ENCODE measurements at regions of chr2 and their contacts with region 1.

Region 1: DNA sequence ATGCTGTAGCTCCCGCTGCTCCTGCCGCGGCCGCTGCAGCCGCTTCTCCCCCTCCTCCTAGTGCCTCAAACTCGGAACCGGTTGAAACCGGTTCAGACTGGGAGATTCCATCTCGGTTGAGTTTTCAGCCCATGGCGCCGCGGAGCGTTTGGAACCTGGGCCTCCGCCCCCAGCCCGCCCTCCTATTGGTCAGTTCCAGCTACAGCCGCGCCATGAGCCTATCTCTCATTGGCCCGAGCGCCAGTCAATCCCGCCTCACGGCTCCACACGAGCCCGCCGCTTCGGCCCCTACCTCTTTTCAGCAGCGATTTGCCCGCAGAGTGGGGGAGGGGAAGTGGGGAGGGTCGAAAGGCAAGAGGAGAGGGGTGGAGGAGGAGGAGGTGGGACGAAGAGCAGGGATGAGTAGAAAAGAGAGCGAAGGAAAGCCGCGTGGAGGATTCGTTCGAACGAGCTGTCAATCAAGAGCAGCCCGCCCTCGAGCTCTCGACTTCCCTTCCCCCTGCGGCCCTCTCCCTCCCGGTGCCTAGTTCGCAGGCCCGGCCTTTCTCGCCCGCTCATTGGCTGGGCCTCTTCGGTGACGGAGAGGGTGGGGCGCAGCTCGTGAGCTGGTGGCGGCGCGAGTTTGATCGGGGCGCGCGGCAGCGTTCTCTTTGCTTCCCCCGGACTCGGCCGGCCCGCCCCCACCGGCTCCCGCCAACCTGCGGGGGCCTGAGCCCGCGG is at the start of gene XPO1:
- DNase-seq: peak; percentile 100
- H3K4me3 Mint-ChIP-seq: peak within 1 kb of the TSS; percentile 97
- H3K27ac Mint-ChIP-seq: peak within 1 kb of the TSS; percentile 99
- H3K4me1 Mint-ChIP-seq: peaks cover 30% of the 10 kb centered on the region
- H3K27me3 Mint-ChIP-seq: peaks cover 3% of the 10 kb centered on the region
- total RNA-seq, gene XPO1: 191 to 198 TPM

Region 2: DNA sequence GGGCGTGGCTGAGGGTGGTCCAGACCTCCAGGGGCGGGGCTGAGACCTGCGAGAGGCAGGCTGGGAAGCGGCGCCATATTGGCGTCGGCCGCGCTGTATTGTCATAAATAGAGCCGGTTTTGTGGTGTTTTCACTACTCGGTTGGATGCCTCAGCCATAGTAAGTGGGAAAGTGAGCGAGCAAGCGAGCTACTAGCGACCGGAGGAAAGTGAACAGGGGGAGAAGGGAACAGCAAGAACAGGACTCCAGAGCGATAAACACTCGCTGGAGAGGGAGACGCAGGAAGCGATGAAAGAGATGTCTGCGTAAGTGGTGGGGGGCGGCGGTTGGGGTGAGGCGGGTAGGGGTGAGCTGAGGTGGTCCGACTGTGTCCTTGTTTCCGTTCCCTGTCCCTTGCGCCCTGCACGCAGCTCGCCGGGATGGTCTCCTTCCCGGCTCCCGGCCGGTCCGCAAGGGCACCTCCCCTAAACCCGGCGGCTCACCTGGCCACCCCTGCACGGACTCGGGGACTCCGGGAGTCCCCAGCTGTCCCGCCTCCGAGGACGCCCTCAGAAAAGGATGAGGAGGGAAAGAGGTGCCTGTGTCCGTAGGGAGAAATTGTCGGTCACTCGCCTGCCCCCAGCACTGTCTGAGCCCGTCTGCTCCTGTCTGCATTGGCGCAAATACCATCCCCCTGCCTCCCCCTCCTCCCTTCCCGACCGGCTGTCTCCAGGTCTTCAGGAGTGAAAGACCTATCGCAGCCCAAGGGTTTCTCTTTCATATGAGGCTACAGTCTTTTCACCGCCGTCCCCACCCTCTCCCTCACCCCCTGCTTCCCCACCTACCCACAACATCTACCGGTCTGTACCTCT is 781.9 kb before region 1 on chr2 and contains the start of gene PAPOLG:
- CTCF ChIA-PET with region 1: no interaction called
- POLR2A ChIA-PET with region 1: interaction called, 5 read pairs
- intact Hi-C with region 1: loop called (anchors 5 kb)
- DNase-seq: peak; percentile 98
- H3K4me3 Mint-ChIP-seq: peak within 1 kb of the TSS; percentile 99
- H3K27ac Mint-ChIP-seq: peak within 1 kb of the TSS; percentile 96
- H3K4me1 Mint-ChIP-seq: peaks cover 39% of the 10 kb centered on the region
- H3K27me3 Mint-ChIP-seq: no peaks in the 10 kb centered on the region
- total RNA-seq, gene PAPOLG: 14.4 to 15.7 TPM

Region 3: DNA sequence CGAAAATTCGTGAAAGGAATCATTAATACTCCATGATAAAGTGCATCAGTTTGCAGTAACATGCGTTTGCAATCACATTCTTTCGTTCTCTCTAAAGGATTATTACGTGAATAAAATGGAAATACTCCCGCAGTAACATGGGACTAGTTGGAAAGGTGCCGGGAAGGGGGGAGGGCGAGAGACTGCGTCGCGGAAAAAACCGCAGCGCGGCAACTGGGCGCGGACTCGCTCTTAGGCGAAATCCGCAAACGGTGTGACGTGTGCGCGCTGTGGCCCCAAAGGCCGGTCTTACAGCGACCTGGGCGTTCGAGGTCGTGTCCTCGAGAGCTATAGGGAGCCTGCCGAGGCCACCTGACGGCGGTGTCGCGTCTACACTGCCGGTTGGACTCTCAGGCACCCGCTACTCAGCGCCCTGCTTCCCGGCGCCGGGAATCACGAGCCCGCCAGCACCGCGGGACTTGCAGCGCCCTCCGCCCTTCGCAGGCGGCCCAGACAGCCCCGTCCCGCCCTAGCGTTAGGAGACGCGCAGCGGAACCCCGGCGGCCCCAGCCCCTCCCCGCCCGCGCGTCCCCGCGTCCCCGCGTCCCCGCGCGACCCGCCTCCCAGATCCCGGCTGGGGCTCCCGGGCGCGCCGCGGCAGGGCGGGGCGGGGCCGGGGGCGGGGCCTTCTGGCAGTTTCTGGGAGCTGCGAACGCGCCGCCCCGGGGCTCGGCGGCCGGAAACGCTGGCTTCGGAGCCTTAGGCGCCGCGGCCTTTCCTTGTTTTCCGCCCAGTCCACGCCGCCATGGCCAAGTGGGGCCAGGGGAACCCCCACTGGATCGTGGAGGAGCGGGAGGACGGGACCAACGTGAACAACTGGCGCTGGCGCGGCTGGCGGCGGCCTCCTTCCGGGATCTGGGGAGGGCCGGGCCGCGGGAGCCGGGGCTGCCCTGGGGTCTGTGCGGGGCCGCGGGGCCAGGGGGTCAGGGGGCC is 361.3 kb before region 1 on chr2:
- CTCF ChIA-PET with region 1: interaction called, 3 read pairs
- POLR2A ChIA-PET with region 1: interaction called, 5 read pairs
- intact Hi-C with region 1: loop called (anchors 1 kb)
- DNase-seq: peak; percentile 95
- H3K4me3 Mint-ChIP-seq: peak overlapping the region; percentile 89
- H3K27ac Mint-ChIP-seq: peak overlapping the region; percentile 94
- H3K4me1 Mint-ChIP-seq: peaks cover 47% of the 10 kb centered on the region
- H3K27me3 Mint-ChIP-seq: no peaks in the 10 kb centered on the region

Region 4: GRCh38 chr2:61470965-61471904 is 67.1 kb before region 1 on chr2 and contains the start of gene USP34:
- CTCF ChIA-PET with region 1: interaction called, 3 read pairs
- POLR2A ChIA-PET with region 1: interaction called, 11 read pairs
- intact Hi-C with region 1: loop called (anchors 1 kb)
- DNase-seq: peak; percentile 95
- H3K4me3 Mint-ChIP-seq: peak within 1 kb of the TSS; percentile 93
- H3K27ac Mint-ChIP-seq: peak within 1 kb of the TSS; percentile 94
- H3K4me1 Mint-ChIP-seq: peaks cover 27% of the 10 kb centered on the region
- H3K27me3 Mint-ChIP-seq: no peaks in the 10 kb centered on the region
- total RNA-seq, gene USP34: 61.1 to 69.4 TPM

Region 5: GRCh38 chr2:61670591-61671501 is 132.5 kb after region 1 on chr2:
- CTCF ChIA-PET with region 1: interaction called, 3 read pairs
- POLR2A ChIA-PET with region 1: no interaction called
- intact Hi-C with region 1: loop called (anchors 2 kb)
- DNase-seq: peak; percentile 46
- H3K4me3 Mint-ChIP-seq: peak overlapping the region; percentile 52
- H3K27ac Mint-ChIP-seq: peak overlapping the region; percentile 66
- H3K4me1 Mint-ChIP-seq: peaks cover 19% of the 10 kb centered on the region
- H3K27me3 Mint-ChIP-seq: no peaks in the 10 kb centered on the region

Region 6: GRCh38 chr2:61854474-61855182 is 316.3 kb after region 1 on chr2:
- CTCF ChIA-PET with region 1: interaction called, 3 read pairs
- POLR2A ChIA-PET with region 1: interaction called, 11 read pairs
- intact Hi-C with region 1: loop called (anchors 1 kb)
- DNase-seq: peak; percentile 93
- H3K4me3 Mint-ChIP-seq: peak overlapping the region; percentile 91
- H3K27ac Mint-ChIP-seq: peak overlapping the region; percentile 90
- H3K4me1 Mint-ChIP-seq: peaks cover 19% of the 10 kb centered on the region
- H3K27me3 Mint-ChIP-seq: no peaks in the 10 kb centered on the region

Region 7: GRCh38 chr2:62195421-62196277 is 657.3 kb after region 1 on chr2 and contains the start of gene B3GNT2:
- CTCF ChIA-PET with region 1: no interaction called
- POLR2A ChIA-PET with region 1: no interaction called
- intact Hi-C with region 1: loop called (anchors 2 kb)
- DNase-seq: peak; percentile 89
- H3K4me3 Mint-ChIP-seq: peak within 1 kb of the TSS; percentile 88
- H3K27ac Mint-ChIP-seq: peak within 1 kb of the TSS; percentile 96
- H3K4me1 Mint-ChIP-seq: peaks cover 28% of the 10 kb centered on the region
- H3K27me3 Mint-ChIP-seq: no peaks in the 10 kb centered on the region
- total RNA-seq, gene B3GNT2: 26.6 to 26.9 TPM

Measured in activated CD4-positive, alpha-beta memory T cell treated with anti-CD3 and anti-CD28 coated beads for 36 hours (primary cell).